ENCODE measurements at regions of chr17 and their contacts with region 1.

Region 1: DNA sequence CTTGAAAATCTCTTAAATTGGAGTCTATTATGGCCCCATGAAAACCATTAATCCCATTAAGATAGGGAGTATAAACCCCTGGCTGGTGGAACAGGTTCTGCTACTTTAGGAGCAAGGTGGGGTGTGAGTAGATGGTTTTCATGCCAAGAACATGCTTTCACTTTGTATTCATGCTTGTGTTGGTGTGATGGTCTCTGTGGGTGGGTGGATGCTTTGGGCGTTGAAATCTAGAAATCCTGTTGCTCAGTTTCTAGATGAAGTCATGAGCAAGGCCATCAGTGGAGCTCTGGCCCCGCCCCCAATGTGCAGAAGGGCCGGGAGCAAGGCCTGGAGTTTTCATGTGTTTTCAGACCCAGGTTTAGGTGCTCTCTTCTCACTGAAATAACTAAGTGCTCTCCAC is 20.1 kb downstream of the PLD6 start:
- DNase-seq: peak; percentile 42 to 55
- H3K4me3 ChIP-seq: no peak overlapping the region
- H3K27ac ChIP-seq: no peak overlapping the region
- H3K4me1 ChIP-seq: peaks cover 9% of the 10 kb centered on the region
- H3K27me3 ChIP-seq: no peaks in the 10 kb centered on the region
- CTCF ChIP-seq: no peak

Region 2: DNA sequence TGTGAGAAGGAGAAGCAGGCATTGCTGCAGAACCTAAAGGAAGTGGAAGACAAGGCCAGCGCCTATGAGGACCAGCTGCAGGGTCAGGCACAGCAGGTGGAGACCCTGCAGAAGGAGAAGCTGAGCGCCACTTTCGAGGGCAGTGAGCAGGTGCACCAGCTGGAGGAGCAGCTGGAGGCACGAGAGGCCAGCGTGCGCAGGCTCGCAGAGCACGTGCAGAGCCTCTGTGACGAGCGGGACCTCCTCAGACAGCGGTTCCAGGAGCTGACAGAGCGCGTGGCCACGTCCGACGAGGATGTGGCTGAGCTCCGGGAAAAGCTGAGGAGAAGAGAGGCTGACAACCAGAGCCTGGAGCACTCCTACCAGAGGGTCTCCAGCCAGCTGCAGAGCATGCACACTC is 21.4 kb before region 1 on chr17:
- CTCF ChIA-PET with region 1: no interaction called
- POLR2A ChIA-PET with region 1: interaction called, 17 read pairs
- intact Hi-C with region 1: no loop called
- DNase-seq: no peak
- H3K4me3 ChIP-seq: no peak overlapping the region
- H3K27ac ChIP-seq: no peak overlapping the region
- H3K4me1 ChIP-seq: no peaks in the 10 kb centered on the region
- H3K27me3 ChIP-seq: no peaks in the 10 kb centered on the region
- CTCF ChIP-seq: no peak

Region 3: GRCh38 chr17:17170346-17170985 is 15.6 kb before region 1 on chr17:
- CTCF ChIA-PET with region 1: no interaction called
- POLR2A ChIA-PET with region 1: interaction called, 13 read pairs
- intact Hi-C with region 1: no loop called
- DNase-seq: no peak
- H3K4me3 ChIP-seq: no peak overlapping the region
- H3K27ac ChIP-seq: no peak overlapping the region
- H3K4me1 ChIP-seq: no peaks in the 10 kb centered on the region
- H3K27me3 ChIP-seq: no peaks in the 10 kb centered on the region
- CTCF ChIP-seq: no peak

Measured in PC-9 (cell line).